Testis (tissue), 5 donors: ENCODE measurements at regions of chr5 and their contacts with region 1.

Region 1: GRCh38 chr5:31581498-31582099 is 49.5 kb downstream of the C5orf22 start:
- DNase-seq: no peak
- H3K4me3 ChIP-seq: no peak overlapping the region
- H3K27ac ChIP-seq: no peak overlapping the region
- H3K4me1 ChIP-seq: no peaks in the 10 kb centered on the region
- H3K27me3 ChIP-seq: no peaks in the 10 kb centered on the region
- CTCF ChIP-seq: peak; percentile 41 to 51 (median 41)
- POLR2A ChIP-seq: no peak

Region 2: DNA sequence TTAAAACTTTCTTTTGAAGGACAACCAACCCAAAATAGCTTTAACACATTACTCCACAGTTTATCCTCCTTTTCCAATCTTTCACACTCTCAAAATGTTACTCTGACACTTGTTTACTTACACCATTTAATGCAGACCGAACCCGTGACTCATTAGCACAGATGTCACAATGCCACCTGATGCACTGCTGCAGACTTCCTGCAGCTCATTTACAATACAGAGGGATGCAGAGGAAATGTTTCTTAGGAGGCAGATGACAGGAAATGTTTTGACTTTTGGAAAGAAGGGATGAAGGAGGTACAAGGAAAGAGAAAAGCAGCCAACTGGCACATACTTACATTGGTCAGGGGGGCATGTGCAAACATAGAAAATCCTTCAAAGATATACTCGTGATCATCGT is 88.7 kb before region 1 on chr5:
- intact Hi-C with region 1: no loop called
- DNase-seq: no peak
- H3K4me3 ChIP-seq: no peak overlapping the region
- H3K27ac ChIP-seq: no peak overlapping the region
- H3K4me1 ChIP-seq: no peaks in the 10 kb centered on the region
- H3K27me3 ChIP-seq: no peaks in the 10 kb centered on the region
- CTCF ChIP-seq: no peak
- POLR2A ChIP-seq: no peak

Region 3: GRCh38 chr5:31809050-31809870 is 227.7 kb after region 1 on chr5:
- intact Hi-C with region 1: loop called (anchors 10 kb)
- DNase-seq: peak; percentile 88
- H3K4me3 ChIP-seq: no peak overlapping the region
- H3K27ac ChIP-seq: no peak overlapping the region
- H3K4me1 ChIP-seq: peaks cover 3% of the 10 kb centered on the region
- H3K27me3 ChIP-seq: no peaks in the 10 kb centered on the region
- CTCF ChIP-seq: peak; percentile 62 to 71 (median 71)
- POLR2A ChIP-seq: no peak